H1 (cell line): ENCODE measurements at regions of chr21 and their contacts with region 1.

Region 1: GRCh38 chr21:37267269-37268184 is at the start of gene VPS26C:
- DNase-seq: peak; percentile 94 to 99
- H3K4me3 ChIP-seq: peak within 1 kb of the TSS; percentile 78 to 97 (median 80)
- H3K27ac ChIP-seq: peak within 1 kb of the TSS; percentile 88
- H3K4me1 ChIP-seq: peaks cover 0 to 3% (median 0%) of the 10 kb centered on the region in 4 experiments; a peak in 1 of 7 replicates
- H3K27me3 ChIP-seq: no peaks in the 10 kb centered on the region
- CTCF ChIP-seq: no peak
- EP300 ChIP-seq: 0 out of 3 replicates have a peak, but pooled peaks of 1 of the 2 experiments have one; percentile 2
- POLR2A ChIP-seq: peak; percentile 85 to 89
- RAD21 ChIP-seq: peak in 1 of 2 experiments; percentile 17; a peak in 2 of 4 replicates
- total RNA-seq, gene VPS26C: 68.1 and 71.6 TPM in 2 replicates

Region 2: DNA sequence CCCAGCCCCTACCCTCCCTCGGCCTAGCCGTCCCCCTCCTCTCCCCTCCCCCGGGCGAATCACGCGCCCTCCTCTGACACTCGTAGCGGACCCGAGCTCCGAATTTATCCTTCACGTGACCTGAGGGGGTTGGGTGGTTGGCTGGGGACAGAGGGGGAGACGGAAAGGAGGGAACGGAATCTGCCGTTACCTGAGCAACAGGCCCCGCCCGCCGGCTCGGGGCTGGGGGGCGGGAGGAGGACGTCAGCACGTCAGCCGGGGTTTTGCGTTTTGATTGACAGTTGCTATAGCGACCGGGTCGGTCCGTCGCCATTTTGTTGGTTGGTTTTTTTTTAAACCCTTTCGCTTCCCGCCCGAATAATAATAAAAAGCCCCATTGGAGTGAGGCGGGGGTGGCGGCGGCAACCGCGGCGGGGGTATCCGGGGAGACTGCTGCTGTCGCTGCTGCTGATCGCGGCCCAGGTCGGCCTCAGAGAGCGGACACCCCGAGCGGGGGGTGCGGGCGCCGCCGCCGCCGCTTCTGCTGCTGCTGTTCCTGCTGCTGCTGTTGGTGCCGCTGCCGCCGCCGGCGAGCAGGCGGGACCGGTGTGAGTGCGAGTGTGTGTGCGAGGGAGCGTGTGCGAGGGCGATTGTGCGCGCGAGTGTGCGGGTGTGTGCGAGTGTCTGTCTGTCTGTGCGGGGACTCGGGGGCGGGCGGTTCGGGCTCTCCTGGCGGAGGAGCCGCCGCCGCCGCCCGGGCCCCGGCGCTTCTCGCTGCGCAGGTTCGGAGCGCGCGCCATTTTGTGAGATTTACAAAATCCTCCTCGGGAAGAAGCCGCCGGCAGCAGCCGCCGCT is 99.2 kb after region 1 on chr21 and contains the start of gene DYRK1A:
- CTCF ChIA-PET with region 1: no interaction called
- POLR2A ChIA-PET with region 1: interaction called, 21 read pairs
- DNase-seq: peak; percentile 95 to 99
- H3K4me3 ChIP-seq: peak within 1 kb of the TSS; percentile 77 to 93 (median 84)
- H3K27ac ChIP-seq: peak within 1 kb of the TSS; percentile 97
- H3K4me1 ChIP-seq: peaks cover 0 to 6% (median 0%) of the 10 kb centered on the region in 4 experiments; a peak in 2 of 7 replicates
- H3K27me3 ChIP-seq: no peaks in the 10 kb centered on the region
- CTCF ChIP-seq: no peak
- EP300 ChIP-seq: 0 out of 3 replicates have a peak, but pooled peaks of 1 of the 2 experiments have one; percentile 6
- POLR2A ChIP-seq: peak; percentile 28 to 84
- RAD21 ChIP-seq: 0 out of 4 replicates have a peak, but pooled peaks of 1 of the 2 experiments have one; percentile 1
- total RNA-seq, gene DYRK1A: 61.1 and 64.4 TPM in 2 replicates